Right cardiac atrium (tissue), 5 donors: ENCODE measurements at regions of chr16 and their contacts with region 1.

Region 1: GRCh38 chr16:77971306-77972271 is 50.8 kb upstream of the CLEC3A start:
- DNase-seq: peak; percentile 80 to 92 (median 90)
- ATAC-seq: peak; percentile 86 to 89
- H3K4me3 ChIP-seq: no peak overlapping the region
- H3K27ac ChIP-seq: no peak overlapping the region
- H3K4me1 ChIP-seq: no peaks in the 10 kb centered on the region
- H3K27me3 ChIP-seq: no peaks in the 10 kb centered on the region

Region 2: GRCh38 chr16:77548766-77549165 is 422.8 kb before region 1 on chr16:
- intact Hi-C with region 1: no loop called
- DNase-seq: no peak
- ATAC-seq: no peak
- H3K4me3 ChIP-seq: no peak overlapping the region
- H3K27ac ChIP-seq: no peak overlapping the region
- H3K4me1 ChIP-seq: peaks cover 1% of the 10 kb centered on the region
- H3K27me3 ChIP-seq: no peaks in the 10 kb centered on the region

Region 3: GRCh38 chr16:77675464-77676324 is 295.9 kb before region 1 on chr16:
- intact Hi-C with region 1: loop called (anchors 1 to 2 kb)
- DNase-seq: peak; percentile 37 to 77 (median 56)
- ATAC-seq: peak; percentile 83 to 86
- H3K4me3 ChIP-seq: no peak overlapping the region
- H3K27ac ChIP-seq: no peak overlapping the region
- H3K4me1 ChIP-seq: no peaks in the 10 kb centered on the region
- H3K27me3 ChIP-seq: no peaks in the 10 kb centered on the region

Region 4: GRCh38 chr16:77850636-77851333 is 120.8 kb before region 1 on chr16:
- intact Hi-C with region 1: loop called in 1 of 4 experiments (anchors 5 kb)
- DNase-seq: no peak
- ATAC-seq: no peak
- H3K4me3 ChIP-seq: no peak overlapping the region
- H3K27ac ChIP-seq: no peak overlapping the region
- H3K4me1 ChIP-seq: no peaks in the 10 kb centered on the region
- H3K27me3 ChIP-seq: no peaks in the 10 kb centered on the region

Region 5: GRCh38 chr16:78045865-78046581 is 74.4 kb after region 1 on chr16:
- intact Hi-C with region 1: no loop called
- DNase-seq: peak; percentile 63 to 90 (median 85)
- ATAC-seq: peak; percentile 91 to 93
- H3K4me3 ChIP-seq: no peak overlapping the region
- H3K27ac ChIP-seq: no peak overlapping the region
- H3K4me1 ChIP-seq: no peaks in the 10 kb centered on the region
- H3K27me3 ChIP-seq: no peaks in the 10 kb centered on the region

Region 6: DNA sequence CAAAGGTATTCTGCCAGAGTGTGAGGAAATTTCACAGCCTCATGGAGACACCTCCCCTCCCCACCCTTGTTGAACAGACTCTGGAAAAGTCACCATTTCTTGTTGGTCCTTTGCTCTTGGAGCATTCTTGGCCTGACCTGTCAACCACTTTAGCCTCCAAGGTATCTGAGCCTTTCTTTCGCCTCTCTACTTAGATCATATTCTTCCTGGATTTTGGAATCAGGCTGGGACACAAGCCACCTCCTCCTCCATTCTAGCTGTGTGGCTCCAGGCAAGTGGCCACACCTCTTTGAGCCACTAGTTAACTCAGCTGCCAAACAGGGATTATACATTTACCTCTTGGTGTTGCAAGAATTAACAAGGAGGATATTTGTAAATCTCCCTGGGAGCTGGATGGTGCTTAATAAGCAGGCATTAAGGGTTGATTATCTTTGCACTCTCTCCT is 321.3 kb after region 1 on chr16:
- intact Hi-C with region 1: no loop called
- DNase-seq: no peak
- ATAC-seq: no peak
- H3K4me3 ChIP-seq: no peak overlapping the region
- H3K27ac ChIP-seq: no peak overlapping the region
- H3K4me1 ChIP-seq: no peaks in the 10 kb centered on the region
- H3K27me3 ChIP-seq: no peaks in the 10 kb centered on the region